Common myeloid progenitor, CD34-positive (primary cell): ENCODE measurements at regions of chr6 and their contacts with region 1.

Region 1: GRCh38 chr6:166775180-166776081 is 148.4 kb upstream of the RPS6KA2 start:
- DNase-seq: peak; percentile 82 to 92 (median 89)
- H3K4me3 ChIP-seq: no peak overlapping the region
- H3K27ac ChIP-seq: no peak overlapping the region
- H3K4me1 ChIP-seq: peaks cover 0 to 5% (median 4%) of the 10 kb centered on the region in 4 experiments
- H3K27me3 ChIP-seq: peaks cover 0 to 22% (median 0%) of the 10 kb centered on the region in 5 experiments

Region 2: GRCh38 chr6:166435574-166435973 is 339.9 kb before region 1 on chr6:
- CTCF ChIA-PET with region 1: interaction called, 21 read pairs
- POLR2A ChIA-PET with region 1: no interaction called
- DNase-seq: peak; percentile 88 to 98 (median 97)
- H3K4me3 ChIP-seq: peak overlapping the region in 3 of 7 experiments; percentile 17 to 19 (median 19)
- H3K27ac ChIP-seq: no peak overlapping the region
- H3K4me1 ChIP-seq: peaks cover 12 to 65% (median 62%) of the 10 kb centered on the region in 4 experiments
- H3K27me3 ChIP-seq: peaks cover 0 to 2% (median 0%) of the 10 kb centered on the region in 5 experiments

Region 3: DNA sequence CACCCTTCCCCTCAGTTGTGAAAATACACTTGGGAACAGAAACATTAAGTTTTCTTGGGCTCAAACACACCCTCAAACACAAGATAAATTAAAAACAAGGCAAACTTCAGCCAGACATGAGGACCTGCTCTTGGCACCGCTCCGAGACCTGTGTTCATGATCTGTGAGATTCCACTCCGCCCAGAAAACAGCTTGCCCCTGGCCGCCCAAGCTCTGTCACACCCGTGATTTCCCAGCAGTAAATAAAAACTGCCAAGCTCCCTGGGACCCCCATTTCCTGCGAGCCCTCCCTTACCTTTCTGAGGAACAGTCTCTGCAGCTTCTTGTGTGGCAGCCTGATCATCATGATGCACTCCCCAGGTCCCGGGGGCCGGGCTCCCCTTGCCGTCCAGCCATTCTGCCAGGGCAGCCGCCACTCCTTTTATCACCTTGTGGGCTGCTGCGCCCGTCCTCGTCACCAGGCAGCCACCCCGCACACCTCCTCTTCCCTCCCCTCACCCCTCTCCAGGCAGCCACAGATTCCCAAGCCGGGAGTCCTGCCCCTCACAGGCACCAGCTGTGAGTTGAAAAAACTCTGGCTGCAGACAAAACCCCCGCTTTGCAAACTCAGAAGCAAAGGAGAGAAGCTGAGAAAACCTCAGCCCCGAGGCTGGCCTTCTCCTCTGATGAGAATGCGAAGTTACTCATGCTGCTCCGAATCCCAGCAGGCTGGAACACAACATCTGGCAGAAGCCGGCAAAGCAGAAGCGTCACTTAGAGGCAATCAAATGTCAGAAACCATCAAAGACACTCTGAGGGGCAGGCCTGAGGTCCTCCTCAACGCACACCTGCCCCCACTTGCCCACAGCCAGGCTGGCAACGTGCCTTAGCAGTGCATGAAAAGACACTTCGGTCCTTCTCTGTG is 17.9 kb before region 1 on chr6:
- CTCF ChIA-PET with region 1: interaction called, 25 read pairs
- POLR2A ChIA-PET with region 1: no interaction called
- DNase-seq: peak in 2 of 3 donors; percentile 53 to 54
- H3K4me3 ChIP-seq: peak overlapping the region in 1 of 7 experiments; percentile 19
- H3K27ac ChIP-seq: no peak overlapping the region
- H3K4me1 ChIP-seq: peaks cover 7 to 15% (median 14%) of the 10 kb centered on the region in 4 experiments
- H3K27me3 ChIP-seq: peaks cover 0 to 26% (median 4%) of the 10 kb centered on the region in 5 experiments

Region 4: GRCh38 chr6:166786704-166787293 is 11.4 kb after region 1 on chr6:
- CTCF ChIA-PET with region 1: interaction called, 19 read pairs
- POLR2A ChIA-PET with region 1: no interaction called
- DNase-seq: peak; percentile 63 to 78 (median 73)
- H3K4me3 ChIP-seq: no peak overlapping the region
- H3K27ac ChIP-seq: no peak overlapping the region
- H3K4me1 ChIP-seq: no peaks in the 10 kb centered on the region
- H3K27me3 ChIP-seq: peaks cover 0 to 2% (median 0%) of the 10 kb centered on the region in 5 experiments

Region 5: GRCh38 chr6:167141667-167142432 is 366.4 kb after region 1 on chr6:
- CTCF ChIA-PET with region 1: interaction called, 29 read pairs
- POLR2A ChIA-PET with region 1: no interaction called
- DNase-seq: peak; percentile 47 to 54 (median 51)
- H3K4me3 ChIP-seq: no peak overlapping the region
- H3K27ac ChIP-seq: no peak overlapping the region
- H3K4me1 ChIP-seq: peaks cover 0 to 10% (median 7%) of the 10 kb centered on the region in 4 experiments
- H3K27me3 ChIP-seq: no peaks in the 10 kb centered on the region

Region 6: DNA sequence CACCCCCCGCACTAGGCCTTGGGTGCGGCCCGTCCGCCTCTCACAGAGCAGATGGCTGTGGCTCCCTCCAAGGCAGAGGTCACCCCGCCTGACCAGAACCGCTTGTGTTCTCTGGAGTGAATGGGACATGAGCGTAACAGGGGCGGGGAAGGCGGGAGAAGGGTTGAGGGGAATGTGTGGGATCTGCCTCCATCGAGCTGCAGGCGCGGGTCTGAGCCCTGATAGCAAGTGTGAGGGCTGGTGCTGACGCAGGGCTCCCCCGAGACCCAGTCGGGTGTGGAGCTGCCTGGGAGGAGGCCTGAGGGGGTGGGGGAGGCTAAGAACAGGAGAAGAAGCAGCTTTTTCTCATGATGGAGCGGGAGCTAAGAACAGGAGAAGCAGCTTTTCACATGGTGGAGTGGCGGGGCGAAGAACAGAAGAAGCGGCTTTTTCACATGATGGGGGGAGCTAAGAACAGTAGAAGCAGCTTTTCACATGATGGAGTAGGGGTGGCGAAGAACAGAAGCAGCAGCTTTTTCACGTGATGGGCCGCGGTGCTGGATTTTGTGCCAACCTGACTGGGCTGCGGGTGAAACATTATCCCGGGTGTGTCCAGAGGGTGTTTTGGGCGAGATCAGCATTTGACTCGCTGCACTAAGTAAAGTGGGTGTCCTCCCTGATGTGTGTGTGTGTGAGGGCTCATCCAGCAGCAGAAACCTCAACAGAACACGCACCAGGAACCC is 718.7 kb after region 1 on chr6:
- CTCF ChIA-PET with region 1: no interaction called
- POLR2A ChIA-PET with region 1: no interaction called
- DNase-seq: no peak
- H3K4me3 ChIP-seq: no peak overlapping the region
- H3K27ac ChIP-seq: no peak overlapping the region
- H3K4me1 ChIP-seq: no peaks in the 10 kb centered on the region
- H3K27me3 ChIP-seq: peaks cover 0 to 42% (median 3%) of the 10 kb centered on the region in 5 experiments